HAP-1 (cell line): ENCODE measurements at regions of chr10 and their contacts with region 1.

Region 1: GRCh38 chr10:93080350-93081046 is 6.8 kb downstream of the CYP26A1 start:
- DNase-seq: peak; percentile 12 to 76
- H3K4me3 ChIP-seq: no peak overlapping the region
- H3K4me1 ChIP-seq: peaks cover 12% of the 10 kb centered on the region
- H3K27me3 ChIP-seq: no peaks in the 10 kb centered on the region

Region 2: DNA sequence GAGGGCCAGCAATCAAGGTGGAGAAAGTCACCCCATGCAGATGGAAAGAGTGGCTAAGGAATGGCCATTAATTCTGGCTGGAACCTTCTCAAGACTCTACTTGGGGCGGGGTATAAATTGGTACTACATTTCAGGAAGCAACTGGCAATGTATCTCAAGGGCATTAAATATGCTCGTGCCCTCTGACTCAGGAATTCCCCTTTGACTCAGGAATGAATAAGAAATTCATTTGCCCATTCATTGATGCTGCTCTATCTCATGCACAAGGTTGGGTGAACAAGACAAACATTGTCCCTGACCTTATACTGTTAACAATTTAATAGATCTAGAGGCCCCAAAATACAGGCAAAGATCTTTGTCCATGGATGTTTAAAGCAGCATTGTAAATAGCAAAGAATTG is 213.5 kb after region 1 on chr10:
- in situ Hi-C with region 1: loop called (anchors 10 kb)
- DNase-seq: no peak
- H3K4me3 ChIP-seq: no peak overlapping the region
- H3K4me1 ChIP-seq: peaks cover 7% of the 10 kb centered on the region
- H3K27me3 ChIP-seq: no peaks in the 10 kb centered on the region

Region 3: GRCh38 chr10:93352638-93353383 is 272.3 kb after region 1 on chr10:
- in situ Hi-C with region 1: loop called (anchors 5 kb)
- DNase-seq: peak in 1 of 2 experiments; percentile 69
- H3K4me3 ChIP-seq: no peak overlapping the region
- H3K4me1 ChIP-seq: no peaks in the 10 kb centered on the region
- H3K27me3 ChIP-seq: no peaks in the 10 kb centered on the region

Region 4: GRCh38 chr10:93461807-93462178 is 381.3 kb after region 1 on chr10:
- in situ Hi-C with region 1: no loop called
- DNase-seq: no peak
- H3K4me3 ChIP-seq: no peak overlapping the region
- H3K4me1 ChIP-seq: 0 out of 2 replicates have a peak, but pooled peaks cover 3% of the 10 kb centered on the region
- H3K27me3 ChIP-seq: no peaks in the 10 kb centered on the region

Region 5: DNA sequence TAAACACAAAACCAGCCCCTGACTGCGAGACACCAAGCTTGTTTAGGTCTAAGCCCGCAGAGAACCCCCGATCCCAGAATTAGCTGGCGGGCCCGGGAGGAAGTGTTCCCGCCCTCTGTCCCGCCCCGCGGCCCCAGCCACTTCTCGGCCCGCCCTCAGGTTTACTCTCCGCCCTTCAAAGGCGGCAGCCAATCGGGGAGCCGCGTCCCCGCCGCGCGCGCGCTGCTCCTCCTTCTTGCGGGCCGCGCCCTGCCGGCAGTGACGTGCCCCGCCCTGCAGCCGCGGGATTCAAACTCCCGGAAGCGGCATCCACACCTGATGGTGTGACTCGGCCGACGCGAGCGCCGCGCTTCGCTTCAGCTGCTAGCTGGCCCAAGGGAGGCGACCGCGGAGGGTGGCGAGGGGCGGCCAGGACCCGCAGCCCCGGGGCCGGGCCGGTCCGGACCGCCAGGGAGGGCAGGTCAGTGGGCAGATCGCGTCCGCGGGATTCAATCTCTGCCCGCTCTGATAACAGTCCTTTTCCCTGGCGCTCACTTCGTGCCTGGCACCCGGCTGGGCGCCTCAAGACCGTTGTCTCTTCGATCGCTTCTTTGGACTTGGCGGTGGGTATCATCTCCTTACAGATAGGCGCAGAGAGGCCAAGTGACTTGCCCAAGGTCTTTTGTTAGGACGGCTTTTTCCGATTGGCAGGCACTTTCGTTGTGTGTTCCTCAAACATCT is 416.0 kb after region 1 on chr10 and contains the start of gene CEP55:
- in situ Hi-C with region 1: loop called (anchors 25 kb)
- DNase-seq: peak; percentile 94 to 96
- H3K4me3 ChIP-seq: peak within 1 kb of the TSS; percentile 76
- H3K4me1 ChIP-seq: peaks cover 20% of the 10 kb centered on the region
- H3K27me3 ChIP-seq: no peaks in the 10 kb centered on the region

Region 6: GRCh38 chr10:94066411-94066810 is 985.9 kb after region 1 on chr10:
- in situ Hi-C with region 1: no loop called
- DNase-seq: peak in 1 of 2 experiments; percentile 60
- H3K4me3 ChIP-seq: no peak overlapping the region
- H3K4me1 ChIP-seq: no peaks in the 10 kb centered on the region
- H3K27me3 ChIP-seq: no peaks in the 10 kb centered on the region